CD8-positive, alpha-beta T cell (primary cell): ENCODE measurements at regions of chr2 and their contacts with region 1.

Region 1: DNA sequence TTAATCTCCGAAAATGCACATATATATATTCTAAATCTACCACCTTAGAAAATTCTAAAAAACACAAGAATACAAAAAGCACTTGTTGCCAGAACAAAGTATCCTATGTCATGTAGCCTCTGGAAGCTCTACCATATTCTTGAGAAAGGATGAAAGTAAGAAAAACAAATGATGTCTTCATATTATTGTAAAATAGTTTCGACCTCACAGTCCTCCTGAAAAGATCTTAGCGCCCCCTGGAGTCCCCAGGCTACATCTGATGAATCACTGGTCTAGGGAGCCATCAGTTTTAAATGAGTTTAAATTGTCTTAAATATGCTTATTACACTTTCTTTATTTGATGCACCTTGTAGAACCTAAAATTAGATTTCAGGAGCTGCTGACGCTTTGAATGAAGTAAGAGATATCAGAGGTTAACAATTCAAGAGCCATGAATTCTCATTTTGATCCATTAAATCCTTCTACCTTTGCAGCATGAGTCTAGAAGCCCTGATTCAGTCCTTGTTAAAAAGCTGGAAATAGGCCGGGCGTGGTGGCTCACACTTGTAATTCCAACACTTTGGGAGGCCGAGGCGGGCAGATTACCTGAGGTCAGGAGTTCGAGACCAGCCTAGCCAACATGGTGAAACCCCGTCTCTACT is 138.8 kb downstream of the MCFD2 start:
- DNase-seq: peak; percentile 13 to 59 (median 48)
- ATAC-seq: no peak
- H3K4me3 ChIP-seq: no peak overlapping the region
- H3K4me3 Mint-ChIP-seq: no peak overlapping the region
- H3K27ac ChIP-seq: no peak overlapping the region
- H3K27ac Mint-ChIP-seq: no peak overlapping the region
- H3K4me1 ChIP-seq: no peaks in the 10 kb centered on the region
- H3K4me1 Mint-ChIP-seq: no peaks in the 10 kb centered on the region
- H3K27me3 ChIP-seq: peaks cover 0 to 3% of the 10 kb centered on the region in 2 experiments
- H3K27me3 Mint-ChIP-seq: peaks cover 19% of the 10 kb centered on the region
- CTCF ChIP-seq: peak; percentile 63

Region 2: DNA sequence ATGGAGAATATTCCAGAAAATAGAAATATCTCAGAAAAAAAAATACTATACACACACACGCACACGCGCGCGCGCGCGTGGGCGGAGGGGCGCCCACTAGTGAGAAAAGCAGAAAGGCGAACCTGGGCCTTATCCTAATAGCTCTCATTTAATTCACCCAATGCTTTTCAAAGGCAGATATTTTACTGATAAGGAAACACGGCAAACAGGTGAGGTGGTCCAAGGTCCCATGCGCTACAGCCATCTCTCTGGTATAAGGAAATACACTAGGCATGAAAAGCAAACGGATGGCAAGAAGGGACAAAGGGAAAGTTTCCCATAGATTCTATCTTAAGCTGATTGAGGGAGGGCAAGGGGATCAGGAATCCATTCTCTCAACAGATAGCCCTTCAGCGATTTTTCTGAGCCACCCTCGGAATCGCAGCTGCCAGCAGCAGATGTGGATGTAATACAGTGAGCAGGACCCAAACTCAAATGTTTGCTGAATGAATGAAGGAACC is 160.8 kb before region 1 on chr2:
- CTCF ChIA-PET with region 1: no interaction called
- POLR2A ChIA-PET with region 1: no interaction called
- intact Hi-C with region 1: no loop called
- DNase-seq: peak in 6 of 9 experiments; percentile 6 to 64 (median 16)
- ATAC-seq: no peak
- H3K4me3 ChIP-seq: peak overlapping the region; percentile 95 to 96
- H3K4me3 Mint-ChIP-seq: peak overlapping the region; percentile 97
- H3K27ac ChIP-seq: peak overlapping the region; percentile 92 to 96
- H3K27ac Mint-ChIP-seq: peak overlapping the region; percentile 98
- H3K4me1 ChIP-seq: peaks cover 26% of the 10 kb centered on the region
- H3K4me1 Mint-ChIP-seq: peaks cover 55% of the 10 kb centered on the region
- H3K27me3 ChIP-seq: no peaks in the 10 kb centered on the region
- H3K27me3 Mint-ChIP-seq: no peaks in the 10 kb centered on the region
- CTCF ChIP-seq: no peak

Region 3: GRCh38 chr2:46632349-46632748 is 144.5 kb before region 1 on chr2:
- CTCF ChIA-PET with region 1: no interaction called
- POLR2A ChIA-PET with region 1: no interaction called
- intact Hi-C with region 1: loop called (anchors 1 kb)
- DNase-seq: peak in 2 of 9 experiments; percentile 29 to 47
- ATAC-seq: no peak
- H3K4me3 ChIP-seq: no peak overlapping the region
- H3K4me3 Mint-ChIP-seq: no peak overlapping the region
- H3K27ac ChIP-seq: no peak overlapping the region
- H3K27ac Mint-ChIP-seq: no peak overlapping the region
- H3K4me1 ChIP-seq: peaks cover 13% of the 10 kb centered on the region
- H3K4me1 Mint-ChIP-seq: peaks cover 19% of the 10 kb centered on the region
- H3K27me3 ChIP-seq: no peaks in the 10 kb centered on the region
- H3K27me3 Mint-ChIP-seq: no peaks in the 10 kb centered on the region
- CTCF ChIP-seq: peak; percentile 41

Region 4: GRCh38 chr2:46657042-46657504 is 119.7 kb before region 1 on chr2:
- CTCF ChIA-PET with region 1: interaction called, 17 read pairs
- POLR2A ChIA-PET with region 1: no interaction called
- intact Hi-C with region 1: loop called (anchors 1 to 2 kb)
- DNase-seq: peak in 2 of 9 experiments; percentile 27 to 38
- ATAC-seq: peak; percentile 46
- H3K4me3 ChIP-seq: no peak overlapping the region
- H3K4me3 Mint-ChIP-seq: no peak overlapping the region
- H3K27ac ChIP-seq: no peak overlapping the region
- H3K27ac Mint-ChIP-seq: no peak overlapping the region
- H3K4me1 ChIP-seq: no peaks in the 10 kb centered on the region
- H3K4me1 Mint-ChIP-seq: no peaks in the 10 kb centered on the region
- H3K27me3 ChIP-seq: no peaks in the 10 kb centered on the region
- H3K27me3 Mint-ChIP-seq: peaks cover 4% of the 10 kb centered on the region
- CTCF ChIP-seq: no peak